ENCODE measurements at regions of chr18 and their contacts with region 1.

Region 1: GRCh38 chr18:54717673-54718407 is 110.4 kb upstream of the RAB27B start:
- DNase-seq: peak; percentile 52
- H3K4me3 Mint-ChIP-seq: peak overlapping the region; percentile 55
- H3K27ac Mint-ChIP-seq: peak overlapping the region; percentile 49
- H3K4me1 Mint-ChIP-seq: peaks cover 55% of the 10 kb centered on the region
- H3K27me3 Mint-ChIP-seq: peaks cover 20% of the 10 kb centered on the region

Region 2: GRCh38 chr18:54607215-54607934 is 110.5 kb before region 1 on chr18:
- intact Hi-C with region 1: no loop called
- DNase-seq: no peak
- H3K4me3 Mint-ChIP-seq: no peak overlapping the region
- H3K27ac Mint-ChIP-seq: no peak overlapping the region
- H3K4me1 Mint-ChIP-seq: peaks cover 10% of the 10 kb centered on the region
- H3K27me3 Mint-ChIP-seq: no peaks in the 10 kb centered on the region

Region 3: GRCh38 chr18:54679318-54680149 is 38.3 kb before region 1 on chr18:
- intact Hi-C with region 1: loop called (anchors 1 kb)
- DNase-seq: no peak
- H3K4me3 Mint-ChIP-seq: no peak overlapping the region
- H3K27ac Mint-ChIP-seq: no peak overlapping the region
- H3K4me1 Mint-ChIP-seq: no peaks in the 10 kb centered on the region
- H3K27me3 Mint-ChIP-seq: peaks cover 11% of the 10 kb centered on the region

Region 4: GRCh38 chr18:54805571-54806334 is 87.9 kb after region 1 on chr18:
- intact Hi-C with region 1: loop called (anchors 1 kb)
- DNase-seq: peak; percentile 11
- H3K4me3 Mint-ChIP-seq: no peak overlapping the region
- H3K27ac Mint-ChIP-seq: peak overlapping the region; percentile 6
- H3K4me1 Mint-ChIP-seq: peaks cover 10% of the 10 kb centered on the region
- H3K27me3 Mint-ChIP-seq: peaks cover 4% of the 10 kb centered on the region

Region 5: GRCh38 chr18:54828281-54828881 is 110.5 kb after region 1 on chr18 and contains the start of gene RAB27B:
- intact Hi-C with region 1: loop called (anchors 5 kb)
- DNase-seq: peak; percentile 47
- H3K4me3 Mint-ChIP-seq: peak within 1 kb of the TSS; percentile 74
- H3K27ac Mint-ChIP-seq: peak within 1 kb of the TSS; percentile 9
- H3K4me1 Mint-ChIP-seq: peaks cover 16% of the 10 kb centered on the region
- H3K27me3 Mint-ChIP-seq: peaks cover 33% of the 10 kb centered on the region
- total RNA-seq, gene RAB27B: 0.10 and 0.21 TPM in 2 replicates

Region 6: GRCh38 chr18:54946149-54946581 is 228.3 kb after region 1 on chr18:
- intact Hi-C with region 1: loop called (anchors 5 kb)
- DNase-seq: peak; percentile 7
- H3K4me3 Mint-ChIP-seq: peak overlapping the region; percentile 84
- H3K27ac Mint-ChIP-seq: peak overlapping the region; percentile 77
- H3K4me1 Mint-ChIP-seq: peaks cover 18% of the 10 kb centered on the region
- H3K27me3 Mint-ChIP-seq: peaks cover 2% of the 10 kb centered on the region

Region 7: GRCh38 chr18:56112013-56112749 is 1394.3 kb after region 1 on chr18:
- intact Hi-C with region 1: loop called (anchors 10 kb)
- DNase-seq: peak; percentile 1
- H3K4me3 Mint-ChIP-seq: no peak overlapping the region
- H3K27ac Mint-ChIP-seq: peak overlapping the region; percentile 20
- H3K4me1 Mint-ChIP-seq: peaks cover 13% of the 10 kb centered on the region
- H3K27me3 Mint-ChIP-seq: peaks cover 4% of the 10 kb centered on the region

Measured in activated T-helper 1 cell treated with anti-CD3 and anti-CD28 coated beads, Interleukin-12 subunit alpha, Interleukin-12 subunit beta, Interleukin-2, Interleukin-4 antibody, amounts not matched to agents 30 ng/mL and 10 ng/mL and 1 ng/mL, durations not matched to agents 14 hours and 24 hours and 36 hours (primary cell).